Posterior cingulate gyrus (tissue), 11 donors: ENCODE measurements at regions of chr2 and their contacts with region 1.

Region 1: DNA sequence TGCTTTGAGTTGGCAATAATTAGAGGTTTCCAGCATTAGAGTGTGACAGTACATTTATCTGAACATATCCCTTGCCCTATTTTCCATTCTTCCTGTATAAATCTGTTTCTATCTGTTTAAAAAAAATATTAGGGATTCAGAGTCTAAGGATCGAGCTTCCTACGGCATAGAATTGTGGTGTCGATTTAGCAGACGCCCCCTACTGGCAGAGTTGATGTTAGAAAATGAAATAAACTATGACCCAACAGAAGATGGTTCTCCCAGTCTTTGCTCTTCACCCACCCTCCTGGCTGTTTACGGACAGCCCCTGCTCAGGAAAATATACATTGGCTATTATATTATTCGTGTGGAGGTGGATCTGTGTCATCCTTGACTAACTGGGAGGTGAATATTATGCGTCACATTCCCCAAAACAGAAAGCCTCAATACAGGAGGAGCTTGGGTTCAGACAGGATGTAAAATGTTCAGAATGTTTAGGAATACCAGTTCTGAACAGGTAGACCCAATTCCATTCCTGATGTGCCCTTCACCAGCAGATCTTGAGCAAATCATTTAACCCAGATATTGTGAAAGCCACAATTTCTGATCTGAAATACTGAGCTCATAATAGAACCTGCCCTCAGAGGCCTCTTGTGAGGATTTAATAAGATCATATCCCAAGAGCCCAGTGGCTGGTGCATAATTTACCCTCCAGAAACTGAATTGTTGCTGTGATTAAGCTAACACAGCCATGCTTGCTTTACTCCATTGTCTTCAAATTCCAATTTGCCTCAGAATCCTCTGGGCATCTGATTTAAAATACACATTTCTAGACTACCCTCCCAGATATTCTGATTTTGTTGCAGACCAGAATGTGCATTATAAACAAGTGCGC is 10.8 kb upstream of the ERMN start:
- DNase-seq: peak in 1 of 10 donors; percentile 53

Region 2: GRCh38 chr2:157150747-157151146 is 185.6 kb before region 1 on chr2:
- intact Hi-C with region 1: no loop called
- DNase-seq: no peak

Region 3: DNA sequence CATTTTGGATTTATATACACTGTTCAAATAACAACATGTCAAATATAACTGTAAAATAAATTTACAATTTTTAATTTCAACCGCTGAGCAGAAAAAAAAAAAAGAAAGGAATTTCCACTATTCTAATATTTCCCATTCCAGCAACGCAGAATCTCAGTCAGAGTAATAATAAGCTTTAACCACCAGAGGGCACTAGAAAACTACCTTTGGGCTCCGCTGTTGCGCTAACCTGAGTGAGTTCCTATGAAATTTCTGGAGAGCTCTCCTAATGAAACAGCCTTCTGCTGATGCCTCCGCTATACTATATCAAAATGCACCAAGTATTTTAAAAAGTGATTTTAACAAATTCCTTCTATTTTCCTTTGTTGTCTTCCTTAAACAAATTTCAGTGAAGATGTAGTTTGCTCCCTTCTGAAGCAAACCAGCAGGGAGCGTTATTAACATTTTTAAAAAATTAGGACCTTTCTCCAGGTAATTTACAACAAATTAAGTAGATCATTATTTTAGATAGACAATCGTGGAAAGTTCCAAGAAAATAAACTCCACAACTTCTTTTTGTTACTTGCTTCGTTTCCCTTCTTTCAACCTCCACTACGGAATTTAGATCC is 33.8 kb before region 1 on chr2:
- intact Hi-C with region 1: loop called (anchors 2 kb)
- DNase-seq: peak in 2 of 10 donors; percentile 21 to 25